Tibial artery (tissue), 4 donors: ENCODE measurements at regions of chr1 and their contacts with region 1.

Region 1: DNA sequence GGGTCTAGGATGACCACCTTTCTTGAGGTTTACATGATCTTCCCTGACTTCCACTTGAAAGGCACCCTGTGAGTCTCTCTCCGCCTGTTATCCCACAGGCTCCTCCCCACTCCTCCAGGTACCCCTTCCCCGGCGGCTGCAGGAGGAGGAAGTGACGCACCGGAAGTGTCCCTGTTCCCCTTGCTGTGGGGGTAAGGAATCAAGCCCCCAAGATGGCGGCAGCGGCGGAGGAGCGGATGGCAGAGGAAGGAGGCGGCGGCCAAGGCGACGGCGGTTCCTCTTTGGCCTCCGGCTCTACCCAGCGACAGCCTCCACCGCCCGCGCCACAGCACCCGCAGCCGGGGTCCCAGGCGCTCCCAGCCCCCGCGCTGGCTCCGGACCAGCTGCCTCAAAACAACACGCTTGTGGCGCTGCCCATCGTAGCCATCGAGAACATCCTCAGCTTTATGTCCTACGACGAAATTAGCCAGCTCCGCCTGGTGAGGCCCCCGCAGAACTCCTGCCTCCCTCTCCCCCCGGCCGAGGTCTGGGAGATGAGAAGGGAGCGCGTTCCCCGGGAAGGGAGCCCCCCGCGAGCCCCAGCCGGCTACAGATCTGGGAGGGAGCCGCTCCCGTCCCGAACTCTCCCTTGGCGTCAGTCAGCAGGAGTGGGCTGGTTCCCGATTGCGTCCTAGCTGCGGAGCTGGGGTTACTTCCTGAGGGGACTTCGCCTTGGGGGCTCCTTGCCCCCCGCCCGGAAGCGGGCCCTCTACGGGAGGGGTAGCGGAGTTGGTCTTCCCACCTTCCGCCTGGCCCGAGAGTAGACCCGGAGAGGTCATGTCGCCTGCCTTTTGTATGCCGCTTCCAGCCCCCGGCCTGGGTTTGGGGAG is at the start of gene FBXO28:
- DNase-seq: peak; percentile 94 to 96
- H3K4me3 ChIP-seq: peak within 1 kb of the TSS; percentile 66 to 75
- H3K27ac ChIP-seq: peak within 1 kb of the TSS; percentile 92 to 94
- H3K4me1 ChIP-seq: peaks cover 0 to 29% (median 21%) of the 10 kb centered on the region in 4 donors
- H3K27me3 ChIP-seq: no peaks in the 10 kb centered on the region
- CTCF ChIP-seq: no peak

Region 2: DNA sequence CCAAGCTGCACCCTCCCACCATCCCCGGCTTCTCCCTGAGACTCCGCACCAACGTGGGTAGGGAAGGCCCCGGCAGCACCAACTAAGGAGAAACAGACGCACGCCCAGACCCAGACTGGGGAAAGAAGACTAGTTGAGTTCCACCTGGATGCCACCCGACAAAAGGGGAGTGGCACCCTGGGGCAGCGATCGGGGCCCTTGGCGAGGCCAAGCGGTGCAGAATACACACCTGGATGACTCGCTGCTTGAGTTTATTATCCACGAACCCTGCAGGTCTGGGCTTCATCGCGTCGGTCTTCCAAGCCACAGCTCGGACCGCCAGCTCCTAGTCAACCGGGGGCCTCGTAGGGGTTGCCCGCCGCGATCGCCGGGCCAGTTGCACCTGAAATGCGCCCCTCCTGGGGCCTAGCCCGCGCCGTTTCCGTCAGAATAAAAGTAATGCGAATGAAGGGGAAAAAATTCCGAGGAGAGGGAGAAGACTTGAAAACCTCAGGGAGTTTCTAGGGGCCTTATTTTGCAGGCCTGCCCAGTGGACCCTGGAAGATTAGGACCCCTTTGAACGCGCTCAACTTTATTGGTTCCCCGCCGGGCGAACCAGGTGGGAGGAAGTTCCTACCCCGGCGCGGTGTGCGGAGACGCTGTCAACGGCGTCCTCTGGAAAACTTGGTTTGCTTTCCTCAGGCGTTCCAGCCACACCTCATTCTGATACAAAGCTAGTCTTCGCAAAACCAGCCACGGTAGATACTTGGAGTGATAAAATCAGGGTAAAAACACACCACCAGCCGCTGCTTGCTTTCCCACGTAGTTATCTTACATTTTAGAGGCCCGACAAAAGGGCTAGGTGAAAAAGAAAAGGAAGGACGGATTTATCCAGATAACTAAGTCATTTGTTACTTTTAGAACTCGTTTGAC is 215.9 kb after region 1 on chr1 and contains the start of gene NVL:
- intact Hi-C with region 1: loop called (anchors 5 kb)
- DNase-seq: peak; percentile 74 to 86
- H3K4me3 ChIP-seq: peak within 1 kb of the TSS; percentile 71 to 75
- H3K27ac ChIP-seq: peak within 1 kb of the TSS; percentile 81 to 88
- H3K4me1 ChIP-seq: peaks cover 0 to 27% (median 18%) of the 10 kb centered on the region in 4 donors
- H3K27me3 ChIP-seq: no peaks in the 10 kb centered on the region
- CTCF ChIP-seq: no peak